GM12878 (cell line): ENCODE measurements at regions of chr1 and their contacts with region 1.

Region 1: DNA sequence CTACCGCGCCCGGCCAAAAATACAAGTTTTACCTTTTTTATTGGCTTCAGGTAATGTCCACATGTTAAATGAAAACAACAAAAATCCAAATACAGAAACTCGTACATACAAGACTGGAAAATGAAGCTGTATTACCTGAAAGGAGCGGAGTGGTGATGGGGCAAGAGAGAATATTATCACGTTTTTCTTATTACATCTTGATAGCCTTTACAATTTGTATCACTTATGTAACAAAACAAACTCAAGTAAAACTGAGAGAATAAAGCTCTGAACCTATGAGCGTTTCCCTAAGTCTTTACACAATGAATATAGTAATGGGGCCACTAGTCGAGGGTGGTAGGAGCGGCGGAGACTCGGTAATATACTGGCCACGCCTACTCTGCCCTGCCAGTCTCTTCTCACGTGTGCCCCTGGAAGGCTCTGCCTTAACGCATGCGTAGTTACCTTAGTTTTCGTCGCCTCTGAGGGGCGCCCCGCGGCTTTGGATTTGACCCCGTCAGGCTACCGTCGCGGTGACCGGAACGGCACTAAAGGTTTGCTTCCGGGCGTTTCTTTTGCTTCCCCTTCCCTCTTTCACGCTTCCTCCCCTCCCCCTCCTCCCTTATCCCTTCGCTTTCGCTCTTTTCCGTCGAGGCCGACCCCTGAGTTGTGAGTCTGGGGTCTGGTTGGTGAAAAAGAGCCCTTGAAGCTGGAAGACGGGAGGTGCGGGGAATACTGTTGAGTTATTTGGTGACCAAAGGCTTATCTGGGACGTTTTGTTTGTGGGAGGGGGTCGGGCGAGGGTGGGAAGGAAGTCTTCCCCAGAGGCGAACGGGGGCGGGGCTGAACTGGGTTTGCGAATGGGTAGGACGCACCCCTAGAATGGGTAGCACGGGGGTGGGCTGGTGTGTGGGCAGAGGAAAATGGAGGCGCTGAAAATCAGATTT is at the start of gene SETDB1:
- DNase-seq: peak; percentile 92
- ATAC-seq: peak; percentile 93
- H3K4me3 ChIP-seq: peak within 1 kb of the TSS; percentile 98
- H3K27ac ChIP-seq: peak within 1 kb of the TSS; percentile 98
- H3K4me1 ChIP-seq: peaks cover 12% of the 10 kb centered on the region
- H3K27me3 ChIP-seq: no peaks in the 10 kb centered on the region
- CTCF ChIP-seq: peak in 1 of 3 experiments; percentile 22; a peak in 1 of 6 replicates
- EP300 ChIP-seq: peak; percentile 26 to 38; a peak in 1 of 4 replicates
- POLR2A ChIP-seq: peak; percentile 71
- RAD21 ChIP-seq: no peak
- polyA plus RNA-seq, gene SETDB1: 14.5 to 14.7 TPM

Region 2: DNA sequence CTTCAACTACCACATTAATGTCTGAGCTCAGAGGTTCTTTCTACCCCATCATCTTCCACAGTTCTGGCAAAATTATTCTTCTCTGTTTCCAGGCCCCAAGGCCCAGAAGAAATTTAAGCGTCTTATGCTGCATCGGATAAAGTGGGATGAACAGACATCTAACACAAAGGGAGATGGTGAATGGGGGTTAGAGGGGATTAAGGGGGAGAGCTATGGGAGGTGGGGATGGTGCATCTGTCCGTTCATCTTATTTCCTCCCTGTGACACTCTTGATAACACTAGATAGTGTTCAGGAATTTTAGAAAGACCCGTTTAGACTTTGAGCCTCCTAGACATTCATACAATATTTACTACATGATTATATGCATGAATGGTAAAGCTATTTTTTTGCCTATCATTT is 579.8 kb before region 1 on chr1:
- CTCF ChIA-PET with region 1: no interaction called
- POLR2A ChIA-PET with region 1: interaction called, 10 read pairs
- RAD21 ChIA-PET with region 1: no interaction called
- SMC1A ChIA-PET with region 1: no interaction called
- in situ Hi-C with region 1: no loop called
- intact Hi-C with region 1: no loop called
- DNase-seq: no peak
- ATAC-seq: no peak
- H3K4me3 ChIP-seq: no peak overlapping the region
- H3K27ac ChIP-seq: no peak overlapping the region
- H3K4me1 ChIP-seq: no peaks in the 10 kb centered on the region
- H3K27me3 ChIP-seq: no peaks in the 10 kb centered on the region
- CTCF ChIP-seq: no peak
- EP300 ChIP-seq: no peak
- POLR2A ChIP-seq: no peak
- RAD21 ChIP-seq: no peak

Region 3: DNA sequence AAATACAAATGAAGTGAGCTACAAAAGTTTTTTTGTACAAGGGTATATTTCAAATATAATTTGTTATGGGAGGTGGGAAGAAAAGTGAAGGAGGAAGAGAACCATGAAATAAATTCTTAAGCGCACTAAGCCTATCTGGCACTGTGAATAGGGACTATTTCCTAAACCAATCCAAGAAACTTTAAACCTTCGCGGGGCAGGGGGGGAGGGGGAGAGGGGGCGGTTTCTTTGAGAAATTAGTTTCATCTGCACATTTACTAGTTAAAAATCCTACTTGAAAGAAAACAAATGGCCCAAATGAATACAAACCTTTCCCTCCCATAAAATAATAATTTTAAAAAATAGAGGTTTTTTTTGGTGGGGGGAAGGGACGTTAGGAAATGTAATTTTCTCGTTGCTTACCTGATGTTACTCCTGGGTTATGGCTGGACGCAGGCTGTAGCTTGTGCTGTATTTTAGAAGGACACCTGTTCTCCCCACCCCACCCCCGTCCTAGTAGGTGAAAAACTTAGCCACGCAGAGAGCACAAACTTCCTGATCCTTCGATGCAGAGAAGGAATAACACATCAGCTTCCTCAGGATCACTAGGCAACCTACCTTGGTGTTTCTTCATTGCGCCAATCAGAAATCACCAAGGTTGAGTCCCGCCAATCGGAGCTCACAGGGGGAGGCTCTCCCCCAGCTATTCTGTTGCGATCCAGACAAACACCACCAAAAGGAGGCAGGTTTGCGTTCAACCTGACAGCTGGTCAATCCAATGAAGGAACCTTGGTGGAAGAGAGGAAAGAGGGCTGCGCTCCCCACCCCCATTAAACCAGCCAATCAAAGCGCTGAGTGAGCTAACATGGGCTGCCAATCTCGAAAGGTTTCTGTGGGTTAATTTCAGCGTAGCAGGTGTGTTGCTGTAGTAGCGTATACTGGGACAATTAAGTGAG is 229.2 kb before region 1 on chr1 and contains the start of gene GOLPH3L:
- CTCF ChIA-PET with region 1: interaction called, 6 read pairs
- POLR2A ChIA-PET with region 1: interaction called, 4 read pairs
- RAD21 ChIA-PET with region 1: interaction called, 7 read pairs
- SMC1A ChIA-PET with region 1: interaction called, 14 read pairs
- in situ Hi-C with region 1: no loop called
- intact Hi-C with region 1: no loop called
- DNase-seq: peak; percentile 99
- ATAC-seq: peak; percentile 100
- H3K4me3 ChIP-seq: peak within 1 kb of the TSS; percentile 72
- H3K27ac ChIP-seq: peak within 1 kb of the TSS; percentile 45
- H3K4me1 ChIP-seq: peaks cover 3% of the 10 kb centered on the region; the same call in 1 of the 2 replicates
- H3K27me3 ChIP-seq: no peaks in the 10 kb centered on the region
- CTCF ChIP-seq: no peak
- EP300 ChIP-seq: no peak
- POLR2A ChIP-seq: peak; percentile 36; the same call in 1 of the 2 replicates
- RAD21 ChIP-seq: no peak
- polyA plus RNA-seq, gene GOLPH3L: 11.8 to 12.1 TPM

Region 4: DNA sequence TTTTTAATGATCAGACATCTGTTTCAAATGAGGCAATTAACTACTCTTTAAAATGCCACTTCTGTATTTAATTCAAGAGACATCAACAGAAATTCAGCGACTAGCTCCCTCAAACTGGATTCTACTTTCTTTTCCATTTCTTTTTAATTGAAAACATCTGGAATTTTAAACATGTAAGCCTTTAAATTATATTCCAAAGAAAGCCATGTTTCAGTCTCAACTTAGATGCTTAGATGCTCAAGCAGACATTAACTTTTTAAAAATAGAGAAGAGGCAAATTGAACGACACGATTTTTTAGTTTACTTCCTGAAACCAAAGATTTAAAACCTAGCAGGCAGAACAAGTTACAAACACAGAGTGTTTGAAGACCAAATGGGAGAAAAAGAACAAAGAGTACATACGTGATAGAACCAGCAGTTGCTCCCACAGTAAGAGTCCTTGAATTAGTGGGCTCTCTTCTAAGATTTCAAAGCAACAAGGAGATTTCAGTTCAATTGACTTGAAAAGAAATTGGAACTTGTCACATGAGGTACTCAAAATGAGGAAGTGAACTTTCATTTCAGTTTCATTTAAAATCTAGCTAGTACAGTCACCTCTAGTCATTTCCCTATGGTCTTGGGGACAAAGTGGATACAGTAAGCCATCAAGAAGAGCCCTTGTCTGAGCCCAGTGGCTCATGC is 160.6 kb before region 1 on chr1 and contains the start of gene CTSS:
- CTCF ChIA-PET with region 1: interaction called, 4 read pairs
- POLR2A ChIA-PET with region 1: interaction called, 3 read pairs
- RAD21 ChIA-PET with region 1: interaction called, 5 read pairs
- SMC1A ChIA-PET with region 1: interaction called, 8 read pairs
- in situ Hi-C with region 1: no loop called
- intact Hi-C with region 1: loop called (anchors 5 kb)
- DNase-seq: peak; percentile 88
- ATAC-seq: peak; percentile 90
- H3K4me3 ChIP-seq: peak within 1 kb of the TSS; percentile 77
- H3K27ac ChIP-seq: peak within 1 kb of the TSS; percentile 96
- H3K4me1 ChIP-seq: peaks cover 9% of the 10 kb centered on the region
- H3K27me3 ChIP-seq: no peaks in the 10 kb centered on the region
- CTCF ChIP-seq: no peak
- EP300 ChIP-seq: no peak; a peak in 1 of 4 replicates
- POLR2A ChIP-seq: no peak
- RAD21 ChIP-seq: no peak
- polyA plus RNA-seq, gene CTSS: 68.6 to 84.8 TPM

Region 5: GRCh38 chr1:150829743-150830142 is 96.3 kb before region 1 on chr1:
- CTCF ChIA-PET with region 1: interaction called, 6 read pairs
- POLR2A ChIA-PET with region 1: no interaction called
- RAD21 ChIA-PET with region 1: interaction called, 3 read pairs
- SMC1A ChIA-PET with region 1: no interaction called
- in situ Hi-C with region 1: no loop called
- intact Hi-C with region 1: loop called (anchors 10 kb)
- DNase-seq: no peak
- ATAC-seq: no peak
- H3K4me3 ChIP-seq: no peak overlapping the region
- H3K27ac ChIP-seq: no peak overlapping the region
- H3K4me1 ChIP-seq: no peaks in the 10 kb centered on the region
- H3K27me3 ChIP-seq: no peaks in the 10 kb centered on the region
- CTCF ChIP-seq: peak in 2 of 3 experiments; percentile 28 to 29; a peak in 2 of 6 replicates
- EP300 ChIP-seq: no peak
- POLR2A ChIP-seq: no peak
- RAD21 ChIP-seq: no peak

Region 6: DNA sequence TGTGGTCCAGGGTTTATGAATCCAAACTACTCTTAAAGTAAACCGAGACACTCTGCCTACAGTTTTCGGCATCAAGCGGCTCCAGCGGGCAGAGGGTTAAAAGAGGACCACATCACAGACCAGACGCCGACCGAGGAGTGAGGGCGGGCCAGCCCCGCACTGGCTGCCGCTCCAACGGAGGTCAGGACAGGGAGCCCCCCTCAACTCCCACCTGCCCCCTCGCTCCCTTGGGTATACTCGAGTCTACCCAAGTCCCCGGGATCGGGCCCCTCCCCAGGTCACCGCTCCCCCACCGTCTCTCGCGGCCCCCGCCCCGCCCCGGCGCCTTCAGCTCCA is 50.0 kb before region 1 on chr1:
- CTCF ChIA-PET with region 1: interaction called, 9 read pairs
- POLR2A ChIA-PET with region 1: interaction called, 4 read pairs
- RAD21 ChIA-PET with region 1: interaction called, 6 read pairs
- SMC1A ChIA-PET with region 1: interaction called, 7 read pairs
- in situ Hi-C with region 1: no loop called
- intact Hi-C with region 1: loop called (anchors 5 kb)
- DNase-seq: no peak
- ATAC-seq: peak; percentile 72
- H3K4me3 ChIP-seq: peak overlapping the region; percentile 79
- H3K27ac ChIP-seq: peak overlapping the region; percentile 54
- H3K4me1 ChIP-seq: peaks cover 4% of the 10 kb centered on the region; the same call in 1 of the 2 replicates
- H3K27me3 ChIP-seq: no peaks in the 10 kb centered on the region
- CTCF ChIP-seq: no peak
- EP300 ChIP-seq: no peak
- POLR2A ChIP-seq: no peak
- RAD21 ChIP-seq: no peak

Region 7: GRCh38 chr1:150912623-150913022 is 13.5 kb before region 1 on chr1:
- CTCF ChIA-PET with region 1: interaction called, 3 read pairs
- POLR2A ChIA-PET with region 1: no interaction called
- RAD21 ChIA-PET with region 1: no interaction called
- SMC1A ChIA-PET with region 1: interaction called, 10 read pairs
- in situ Hi-C with region 1: no loop called
- intact Hi-C with region 1: no loop called
- DNase-seq: no peak
- ATAC-seq: no peak
- H3K4me3 ChIP-seq: no peak overlapping the region
- H3K27ac ChIP-seq: no peak overlapping the region
- H3K4me1 ChIP-seq: no peaks in the 10 kb centered on the region
- H3K27me3 ChIP-seq: no peaks in the 10 kb centered on the region
- CTCF ChIP-seq: no peak
- EP300 ChIP-seq: no peak
- POLR2A ChIP-seq: no peak
- RAD21 ChIP-seq: no peak